ENCODE measurements at regions of chr1 and their contacts with region 1.

Region 1: GRCh38 chr1:160006312-160006940 is 25.4 kb downstream of the PIGM start:
- DNase-seq: peak; percentile 85
- H3K4me3 Mint-ChIP-seq: no peak overlapping the region
- H3K27ac Mint-ChIP-seq: no peak overlapping the region
- H3K4me1 Mint-ChIP-seq: no peaks in the 10 kb centered on the region
- H3K27me3 Mint-ChIP-seq: peaks cover 42% of the 10 kb centered on the region
- CTCF ChIP-seq: peak; percentile 93

Region 2: DNA sequence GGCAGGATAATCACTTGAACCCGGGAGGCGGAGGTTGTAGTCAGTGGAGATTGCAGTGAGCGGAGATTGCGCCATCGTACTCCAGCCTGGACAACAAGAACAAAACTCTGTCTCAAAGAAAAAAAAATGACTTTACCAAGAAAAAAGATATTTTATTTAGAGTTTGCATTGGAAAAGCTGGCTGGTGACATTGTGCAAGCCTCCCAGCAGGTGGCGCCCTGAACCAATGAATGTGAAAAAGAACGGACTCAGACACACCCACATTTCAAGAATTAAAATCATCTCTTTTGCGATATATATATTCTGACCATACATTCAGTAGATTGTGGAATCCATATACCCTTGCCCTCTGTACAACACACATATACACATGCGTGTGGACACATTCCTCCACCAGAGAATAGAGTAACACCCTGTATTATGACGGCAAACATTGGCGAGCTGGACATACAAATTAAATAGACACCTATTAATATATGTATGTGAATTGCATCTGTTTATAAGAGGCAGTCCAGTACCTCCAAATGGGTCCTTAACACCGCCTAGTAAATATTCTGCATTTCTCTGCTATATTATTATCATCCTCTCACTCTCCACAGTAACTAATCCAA is 874.0 kb before region 1 on chr1:
- CTCF ChIA-PET with region 1: interaction called, 5 read pairs
- intact Hi-C with region 1: loop called (anchors 10 kb)
- DNase-seq: peak; percentile 85
- H3K4me3 Mint-ChIP-seq: no peak overlapping the region
- H3K27ac Mint-ChIP-seq: no peak overlapping the region
- H3K4me1 Mint-ChIP-seq: no peaks in the 10 kb centered on the region
- H3K27me3 Mint-ChIP-seq: no peaks in the 10 kb centered on the region
- CTCF ChIP-seq: peak; percentile 89

Region 3: GRCh38 chr1:159214149-159214760 is 792.2 kb before region 1 on chr1:
- CTCF ChIA-PET with region 1: no interaction called
- intact Hi-C with region 1: loop called (anchors 2 kb)
- DNase-seq: peak; percentile 60
- H3K4me3 Mint-ChIP-seq: no peak overlapping the region
- H3K27ac Mint-ChIP-seq: no peak overlapping the region
- H3K4me1 Mint-ChIP-seq: peaks cover 8% of the 10 kb centered on the region
- H3K27me3 Mint-ChIP-seq: peaks cover 85% of the 10 kb centered on the region
- CTCF ChIP-seq: peak; percentile 90

Region 4: GRCh38 chr1:159924981-159925712 is 81.3 kb before region 1 on chr1 and contains the start of gene TAGLN2:
- CTCF ChIA-PET with region 1: interaction called, 13 read pairs
- intact Hi-C with region 1: no loop called
- DNase-seq: peak; percentile 95
- H3K4me3 Mint-ChIP-seq: peak within 1 kb of the TSS; percentile 83
- H3K27ac Mint-ChIP-seq: peak within 1 kb of the TSS; percentile 98
- H3K4me1 Mint-ChIP-seq: peaks cover 48% of the 10 kb centered on the region
- H3K27me3 Mint-ChIP-seq: no peaks in the 10 kb centered on the region
- CTCF ChIP-seq: no peak
- total RNA-seq, gene TAGLN2: 612 and 708 TPM in 2 replicates

Region 5: GRCh38 chr1:159945483-159946241 is 60.8 kb before region 1 on chr1 and contains the start of gene IGSF9:
- CTCF ChIA-PET with region 1: interaction called, 55 read pairs
- intact Hi-C with region 1: no loop called
- DNase-seq: peak; percentile 94
- H3K4me3 Mint-ChIP-seq: peak within 1 kb of the TSS; percentile 94
- H3K27ac Mint-ChIP-seq: peak within 1 kb of the TSS; percentile 86
- H3K4me1 Mint-ChIP-seq: peaks cover 35% of the 10 kb centered on the region
- H3K27me3 Mint-ChIP-seq: peaks cover 9% of the 10 kb centered on the region
- CTCF ChIP-seq: peak; percentile 48
- total RNA-seq, gene IGSF9: 7.5 and 7.6 TPM in 2 replicates

Measured in Calu3 (cell line).